ENCODE measurements at regions of chr10 and their contacts with region 1.

Region 1: GRCh38 chr10:5548527-5549223 is 23.9 kb downstream of the CALML3 start:
- DNase-seq: peak; percentile 41 to 81 (median 51)
- H3K4me3 ChIP-seq: no peak overlapping the region
- H3K4me3 Mint-ChIP-seq: no peak overlapping the region
- H3K27ac ChIP-seq: no peak overlapping the region
- H3K27ac Mint-ChIP-seq: no peak overlapping the region
- H3K4me1 ChIP-seq: peaks cover 45% of the 10 kb centered on the region
- H3K4me1 Mint-ChIP-seq: peaks cover 12 to 33% (median 26%) of the 10 kb centered on the region in 4 donors
- H3K27me3 ChIP-seq: no peaks in the 10 kb centered on the region
- H3K27me3 Mint-ChIP-seq: peaks cover 0 to 4% of the 10 kb centered on the region in 2 donors

Region 2: DNA sequence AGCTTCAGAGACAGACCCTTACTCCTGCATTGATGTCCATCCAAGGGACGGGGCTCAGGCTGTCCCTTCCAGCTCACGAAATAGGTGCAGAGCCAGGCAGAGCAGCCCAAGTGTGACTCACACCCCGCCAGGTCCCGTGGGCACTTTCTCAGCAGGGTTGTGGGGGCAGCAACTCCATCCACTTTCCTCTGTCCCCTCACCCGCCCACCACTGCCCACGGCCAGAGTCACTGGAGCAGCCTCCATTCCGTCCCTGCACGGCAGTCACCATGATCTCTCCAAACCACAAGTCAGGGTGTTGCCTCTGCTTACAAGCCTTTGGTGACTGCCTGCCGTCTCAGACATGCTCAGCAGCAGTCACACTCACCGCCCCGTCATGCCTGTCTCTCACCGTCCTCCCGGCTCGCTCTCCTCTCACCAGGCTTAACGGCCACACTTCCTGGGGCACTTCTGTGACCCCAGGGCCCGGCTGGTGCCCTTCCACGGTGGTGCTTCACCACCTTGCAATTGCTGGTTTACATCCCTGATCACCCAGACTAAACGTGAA is 15.4 kb after region 1 on chr10:
- CTCF ChIA-PET with region 1: interaction called, 3 read pairs
- POLR2A ChIA-PET with region 1: interaction called, 21 read pairs
- intact Hi-C with region 1: loop called (anchors 2 kb)
- DNase-seq: peak; percentile 52 to 67 (median 58)
- H3K4me3 ChIP-seq: peak overlapping the region; percentile 19 to 67
- H3K4me3 Mint-ChIP-seq: peak overlapping the region; percentile 81 to 95 (median 86)
- H3K27ac ChIP-seq: peak overlapping the region; percentile 61
- H3K27ac Mint-ChIP-seq: peak overlapping the region; percentile 96 to 99 (median 98)
- H3K4me1 ChIP-seq: peaks cover 33% of the 10 kb centered on the region
- H3K4me1 Mint-ChIP-seq: peaks cover 29 to 49% (median 35%) of the 10 kb centered on the region in 4 donors
- H3K27me3 ChIP-seq: no peaks in the 10 kb centered on the region
- H3K27me3 Mint-ChIP-seq: peaks cover 0 to 3% of the 10 kb centered on the region in 2 donors